Left ventricle myocardium inferior (tissue), 1 donor: ENCODE measurements at regions of chr5 and their contacts with region 1.

Region 1: GRCh38 chr5:6623941-6624340 is 8.9 kb downstream of the NSUN2 start:
- DNase-seq: no peak
- H3K4me3 ChIP-seq: no peak overlapping the region
- H3K27ac ChIP-seq: no peak overlapping the region
- H3K4me1 ChIP-seq: peaks cover 7% of the 10 kb centered on the region
- H3K27me3 ChIP-seq: no peaks in the 10 kb centered on the region
- CTCF ChIP-seq: no peak

Region 2: DNA sequence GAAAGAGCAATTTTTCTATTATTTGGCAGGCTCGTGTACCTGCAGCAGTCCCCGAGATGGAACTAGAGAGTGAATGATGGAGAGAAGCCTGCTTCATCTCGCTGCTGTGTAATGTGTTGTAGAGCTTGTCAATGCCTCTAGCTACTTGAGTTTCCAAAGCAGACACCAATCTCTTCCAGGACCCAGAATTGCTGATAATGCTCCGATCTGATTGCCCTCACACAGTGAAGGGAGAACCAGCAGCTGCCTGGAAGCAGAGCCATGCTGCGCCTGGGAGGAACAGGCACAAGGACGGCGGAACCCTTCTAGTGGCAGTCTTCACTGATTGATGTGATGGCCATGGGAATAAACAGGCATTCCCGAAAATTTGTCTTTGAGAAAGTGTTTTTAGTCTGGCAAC is 913.5 kb before region 1 on chr5:
- intact Hi-C with region 1: no loop called
- DNase-seq: no peak
- H3K4me3 ChIP-seq: no peak overlapping the region
- H3K27ac ChIP-seq: no peak overlapping the region
- H3K4me1 ChIP-seq: no peaks in the 10 kb centered on the region
- H3K27me3 ChIP-seq: no peaks in the 10 kb centered on the region
- CTCF ChIP-seq: no peak

Region 3: GRCh38 chr5:6745706-6746222 is 121.8 kb after region 1 on chr5:
- intact Hi-C with region 1: loop called (anchors 10 kb)
- DNase-seq: no peak
- H3K4me3 ChIP-seq: no peak overlapping the region
- H3K27ac ChIP-seq: peak overlapping the region; percentile 64
- H3K4me1 ChIP-seq: peaks cover 12% of the 10 kb centered on the region
- H3K27me3 ChIP-seq: no peaks in the 10 kb centered on the region
- CTCF ChIP-seq: peak; percentile 83